ENCODE measurements at regions of chr9 and their contacts with region 1.

Region 1: GRCh38 chr9:99906403-99907207 is at the start of gene STX17:
- DNase-seq: peak; percentile 60
- ATAC-seq: peak; percentile 82
- H3K4me3 ChIP-seq: peak within 1 kb of the TSS; percentile 85
- H3K27ac ChIP-seq: peak within 1 kb of the TSS; percentile 69
- H3K4me1 ChIP-seq: peaks cover 9% of the 10 kb centered on the region; the same call in 1 of the 2 replicates
- H3K27me3 ChIP-seq: no peaks in the 10 kb centered on the region
- CTCF ChIP-seq: no peak
- total RNA-seq, gene STX17: 12.8 TPM in 2 replicates

Region 2: GRCh38 chr9:99840072-99840471 is 66.5 kb before region 1 on chr9:
- CTCF ChIA-PET with region 1: no interaction called
- POLR2A ChIA-PET with region 1: no interaction called
- intact Hi-C with region 1: no loop called
- DNase-seq: no peak
- ATAC-seq: no peak
- H3K4me3 ChIP-seq: no peak overlapping the region
- H3K27ac ChIP-seq: no peak overlapping the region
- H3K4me1 ChIP-seq: no peaks in the 10 kb centered on the region
- H3K27me3 ChIP-seq: no peaks in the 10 kb centered on the region
- CTCF ChIP-seq: no peak

Region 3: GRCh38 chr9:99868845-99869244 is 37.8 kb before region 1 on chr9:
- CTCF ChIA-PET with region 1: no interaction called
- POLR2A ChIA-PET with region 1: no interaction called
- intact Hi-C with region 1: loop called (anchors 5 kb)
- DNase-seq: no peak
- ATAC-seq: no peak
- H3K4me3 ChIP-seq: no peak overlapping the region
- H3K27ac ChIP-seq: no peak overlapping the region
- H3K4me1 ChIP-seq: peaks cover 24% of the 10 kb centered on the region
- H3K27me3 ChIP-seq: no peaks in the 10 kb centered on the region
- CTCF ChIP-seq: no peak